Activated naive CD4-positive, alpha-beta T cell treated with anti-CD3 and anti-CD28 coated beads for 36 hours (primary cell): ENCODE measurements at regions of chr10 and their contacts with region 1.

Region 1: GRCh38 chr10:102245101-102245931 is at the start of gene GBF1:
- DNase-seq: peak; percentile 95
- H3K4me3 Mint-ChIP-seq: peak within 1 kb of the TSS; percentile 92
- H3K27ac Mint-ChIP-seq: peak within 1 kb of the TSS; percentile 86
- H3K4me1 Mint-ChIP-seq: peaks cover 41% of the 10 kb centered on the region
- H3K27me3 Mint-ChIP-seq: peaks cover 15% of the 10 kb centered on the region
- total RNA-seq, gene GBF1: 32.1 to 34.5 TPM

Region 2: DNA sequence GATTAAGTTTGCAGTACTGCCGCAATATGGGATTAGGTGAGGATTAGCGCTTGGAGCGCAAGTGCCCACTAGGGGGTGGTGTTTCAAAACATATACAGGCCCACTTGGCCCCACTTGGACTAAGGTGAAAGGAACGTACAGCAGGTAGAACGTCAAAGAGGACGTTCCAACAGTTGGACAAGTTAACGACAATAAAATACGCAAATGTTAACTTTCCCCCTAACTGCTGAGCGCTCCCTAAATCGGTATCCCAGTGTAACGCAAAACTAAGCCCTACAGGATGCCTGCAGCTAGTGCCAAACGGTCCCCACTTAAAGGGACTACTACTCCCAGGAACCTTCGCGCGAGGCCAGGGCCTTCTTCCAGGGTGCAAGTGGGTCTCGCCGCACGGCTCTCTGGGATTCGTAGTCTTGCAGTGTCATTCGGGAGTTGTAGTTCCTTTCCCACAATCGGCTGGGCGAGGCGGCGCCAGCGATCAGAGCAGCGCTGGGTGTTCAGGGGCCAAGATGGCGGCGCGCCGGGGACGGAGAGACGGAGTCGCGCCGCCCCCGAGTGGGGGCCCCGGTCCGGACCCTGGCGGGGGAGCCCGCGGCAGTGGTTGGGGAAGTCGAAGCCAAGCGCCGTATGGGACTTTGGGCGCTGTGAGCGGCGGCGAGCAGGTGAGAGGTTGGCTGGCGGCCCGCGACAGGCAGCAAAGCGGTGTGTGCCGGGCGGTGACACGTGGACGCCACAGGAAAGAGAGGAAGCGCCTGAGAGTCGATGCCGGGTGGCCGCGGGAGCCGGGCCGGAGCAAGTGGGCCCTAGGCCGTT is 112.5 kb before region 1 on chr10 and contains the start of gene PPRC1:
- CTCF ChIA-PET with region 1: no interaction called
- intact Hi-C with region 1: loop called (anchors 1 kb)
- DNase-seq: peak; percentile 99
- H3K4me3 Mint-ChIP-seq: peak within 1 kb of the TSS; percentile 97
- H3K27ac Mint-ChIP-seq: peak within 1 kb of the TSS; percentile 96
- H3K4me1 Mint-ChIP-seq: peaks cover 42% of the 10 kb centered on the region
- H3K27me3 Mint-ChIP-seq: no peaks in the 10 kb centered on the region
- total RNA-seq, gene PPRC1: 54.6 to 55.0 TPM

Region 3: GRCh38 chr10:102231357-102232318 is 13.7 kb before region 1 on chr10:
- CTCF ChIA-PET with region 1: interaction called, 36 read pairs
- intact Hi-C with region 1: no loop called
- DNase-seq: peak; percentile 78
- H3K4me3 Mint-ChIP-seq: peak overlapping the region; percentile 60
- H3K27ac Mint-ChIP-seq: no peak overlapping the region
- H3K4me1 Mint-ChIP-seq: peaks cover 4% of the 10 kb centered on the region
- H3K27me3 Mint-ChIP-seq: peaks cover 52% of the 10 kb centered on the region

Region 4: DNA sequence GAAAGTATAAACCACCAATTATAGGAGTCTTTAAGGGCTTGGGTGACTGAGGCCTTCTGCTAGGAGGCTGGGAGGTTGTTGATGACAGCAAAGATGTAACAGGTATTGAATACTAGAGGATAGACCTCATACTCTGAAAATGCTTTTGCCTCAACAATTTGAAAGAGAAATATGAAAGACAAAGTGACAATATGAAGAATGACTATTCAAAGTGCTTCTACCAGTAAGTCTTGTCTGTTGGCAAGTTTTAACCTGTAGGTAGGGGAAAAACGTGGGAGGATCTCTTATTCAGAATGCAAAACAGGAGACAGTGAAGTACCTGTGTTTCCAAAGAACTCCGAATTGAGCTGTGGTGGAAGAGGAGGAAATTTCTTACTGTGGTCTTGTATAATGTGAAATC is 38.2 kb after region 1 on chr10:
- CTCF ChIA-PET with region 1: no interaction called
- intact Hi-C with region 1: loop called (anchors 1 kb)
- DNase-seq: peak; percentile 33
- H3K4me3 Mint-ChIP-seq: no peak overlapping the region
- H3K27ac Mint-ChIP-seq: peak overlapping the region; percentile 80
- H3K4me1 Mint-ChIP-seq: peaks cover 75% of the 10 kb centered on the region
- H3K27me3 Mint-ChIP-seq: no peaks in the 10 kb centered on the region

Region 5: GRCh38 chr10:102334101-102334500 is 88.8 kb after region 1 on chr10:
- CTCF ChIA-PET with region 1: no interaction called
- intact Hi-C with region 1: no loop called
- DNase-seq: no peak
- H3K4me3 Mint-ChIP-seq: no peak overlapping the region
- H3K27ac Mint-ChIP-seq: no peak overlapping the region
- H3K4me1 Mint-ChIP-seq: peaks cover 20% of the 10 kb centered on the region
- H3K27me3 Mint-ChIP-seq: no peaks in the 10 kb centered on the region

Region 6: DNA sequence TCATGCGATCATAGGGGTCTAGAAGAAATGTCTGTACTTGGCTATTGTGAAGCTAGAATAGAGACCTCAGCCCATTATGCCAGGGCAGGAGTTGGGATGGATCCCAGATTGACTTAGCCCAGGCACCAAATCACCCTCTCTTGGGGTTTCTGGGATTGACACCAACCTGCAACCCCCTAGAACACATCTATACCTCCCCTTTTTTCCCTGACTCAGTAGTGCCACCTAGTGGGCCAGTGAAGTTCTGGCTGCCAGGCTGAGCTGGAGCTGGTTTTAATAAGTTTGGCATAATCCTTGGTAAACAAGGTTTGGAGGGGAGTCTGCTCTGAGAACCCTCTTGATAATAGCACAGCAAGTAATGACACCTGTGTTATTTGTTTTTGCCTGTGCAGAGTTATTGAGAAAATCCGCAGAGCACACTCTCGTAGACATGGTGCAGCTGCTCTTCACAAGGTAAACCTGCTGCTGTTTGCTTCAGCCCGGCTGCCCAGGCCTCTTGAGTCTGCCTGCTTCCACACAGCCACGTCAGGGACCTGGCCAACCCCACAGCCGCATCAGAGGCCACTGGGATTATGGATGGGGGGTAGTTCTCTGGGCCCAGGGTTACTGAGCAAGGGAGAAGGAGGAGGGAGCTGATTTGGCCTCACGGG is 106.9 kb after region 1 on chr10:
- CTCF ChIA-PET with region 1: interaction called, 685 read pairs
- intact Hi-C with region 1: no loop called
- DNase-seq: peak; percentile 87
- H3K4me3 Mint-ChIP-seq: no peak overlapping the region
- H3K27ac Mint-ChIP-seq: no peak overlapping the region
- H3K4me1 Mint-ChIP-seq: no peaks in the 10 kb centered on the region
- H3K27me3 Mint-ChIP-seq: no peaks in the 10 kb centered on the region

Region 7: GRCh38 chr10:102540023-102540422 is 294.7 kb after region 1 on chr10:
- CTCF ChIA-PET with region 1: no interaction called
- intact Hi-C with region 1: no loop called
- DNase-seq: no peak
- H3K4me3 Mint-ChIP-seq: no peak overlapping the region
- H3K27ac Mint-ChIP-seq: no peak overlapping the region
- H3K4me1 Mint-ChIP-seq: peaks cover 17% of the 10 kb centered on the region
- H3K27me3 Mint-ChIP-seq: no peaks in the 10 kb centered on the region

Region 8: GRCh38 chr10:102713814-102714620 is 468.7 kb after region 1 on chr10 and contains the start of gene ARL3:
- CTCF ChIA-PET with region 1: interaction called, 4 read pairs
- intact Hi-C with region 1: loop called (anchors 5 kb)
- DNase-seq: peak; percentile 98
- H3K4me3 Mint-ChIP-seq: peak within 1 kb of the TSS; percentile 92
- H3K27ac Mint-ChIP-seq: peak within 1 kb of the TSS; percentile 79
- H3K4me1 Mint-ChIP-seq: peaks cover 44% of the 10 kb centered on the region
- H3K27me3 Mint-ChIP-seq: no peaks in the 10 kb centered on the region
- total RNA-seq, gene ARL3: 3.9 TPM